Endothelial cell of umbilical vein (primary cell): ENCODE measurements at regions of chr2 and their contacts with region 1.

Region 1: GRCh38 chr2:95728878-95729596 is 137.2 kb downstream of the TRIM43 start:
- DNase-seq: peak; percentile 78
- H3K4me3 ChIP-seq: no peak overlapping the region
- H3K27ac ChIP-seq: no peak overlapping the region
- H3K4me1 ChIP-seq: no peaks in the 10 kb centered on the region
- H3K27me3 ChIP-seq: no peaks in the 10 kb centered on the region
- CTCF ChIP-seq: peak; percentile 34 to 48
- POLR2A ChIP-seq: no peak

Region 2: DNA sequence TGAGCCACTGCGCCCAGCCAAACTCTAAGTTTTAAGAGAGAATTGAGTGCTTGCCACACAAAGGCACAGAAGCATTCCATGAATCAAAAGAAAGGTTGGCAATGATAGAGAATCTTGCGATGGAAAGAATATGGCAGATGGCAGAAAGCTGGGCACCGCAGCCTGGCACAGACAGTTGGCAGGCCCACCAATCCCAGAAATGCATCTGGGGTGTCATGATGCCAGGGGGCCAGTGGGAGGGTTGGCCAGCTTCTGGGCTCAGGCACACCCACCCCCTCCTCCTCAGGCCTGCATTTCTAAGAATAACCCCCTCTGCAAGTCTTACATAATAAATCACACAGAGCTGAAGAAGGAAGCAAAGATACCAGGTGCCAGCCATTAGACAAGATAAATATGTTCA is 543.8 kb before region 1 on chr2:
- CTCF ChIA-PET with region 1: no interaction called
- POLR2A ChIA-PET with region 1: no interaction called
- dilution Hi-C with region 1: no loop called
- intact Hi-C with region 1: loop called (anchors 5 kb)
- DNase-seq: no peak
- H3K4me3 ChIP-seq: no peak overlapping the region
- H3K27ac ChIP-seq: no peak overlapping the region
- H3K4me1 ChIP-seq: no peaks in the 10 kb centered on the region
- H3K27me3 ChIP-seq: no peaks in the 10 kb centered on the region
- CTCF ChIP-seq: no peak
- POLR2A ChIP-seq: no peak

Region 3: DNA sequence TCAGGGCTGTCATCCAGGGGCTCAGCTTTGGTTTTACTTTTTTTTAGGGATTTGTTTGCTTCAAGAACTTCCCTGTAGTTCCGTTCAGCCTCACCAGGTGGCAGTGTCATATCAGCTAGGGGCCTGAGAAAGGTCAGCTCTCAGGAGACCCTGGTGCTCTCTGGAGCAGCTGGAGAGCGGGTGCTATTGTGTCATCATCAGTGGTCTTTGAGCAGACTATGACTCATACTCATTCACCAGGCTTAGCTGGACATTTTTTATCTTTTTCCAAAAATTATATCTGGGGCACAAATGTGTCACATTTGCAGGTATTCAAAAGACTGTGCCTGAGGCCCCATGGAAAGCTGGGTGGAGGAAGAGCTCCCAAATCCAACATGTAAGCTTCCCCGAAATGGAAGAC is 497.3 kb before region 1 on chr2:
- CTCF ChIA-PET with region 1: no interaction called
- POLR2A ChIA-PET with region 1: no interaction called
- dilution Hi-C with region 1: no loop called
- intact Hi-C with region 1: loop called (anchors 5 kb)
- DNase-seq: peak; percentile 45
- H3K4me3 ChIP-seq: no peak overlapping the region
- H3K27ac ChIP-seq: no peak overlapping the region
- H3K4me1 ChIP-seq: no peaks in the 10 kb centered on the region
- H3K27me3 ChIP-seq: no peaks in the 10 kb centered on the region
- CTCF ChIP-seq: peak; percentile 56 to 60
- POLR2A ChIP-seq: no peak

Region 4: GRCh38 chr2:95552911-95553310 is 176.1 kb before region 1 on chr2:
- CTCF ChIA-PET with region 1: no interaction called
- POLR2A ChIA-PET with region 1: no interaction called
- dilution Hi-C with region 1: no loop called
- intact Hi-C with region 1: no loop called
- DNase-seq: no peak
- H3K4me3 ChIP-seq: no peak overlapping the region
- H3K27ac ChIP-seq: no peak overlapping the region
- H3K4me1 ChIP-seq: no peaks in the 10 kb centered on the region
- H3K27me3 ChIP-seq: peaks cover 2 to 14% of the 10 kb centered on the region in 2 experiments
- CTCF ChIP-seq: no peak
- POLR2A ChIP-seq: no peak

Region 5: DNA sequence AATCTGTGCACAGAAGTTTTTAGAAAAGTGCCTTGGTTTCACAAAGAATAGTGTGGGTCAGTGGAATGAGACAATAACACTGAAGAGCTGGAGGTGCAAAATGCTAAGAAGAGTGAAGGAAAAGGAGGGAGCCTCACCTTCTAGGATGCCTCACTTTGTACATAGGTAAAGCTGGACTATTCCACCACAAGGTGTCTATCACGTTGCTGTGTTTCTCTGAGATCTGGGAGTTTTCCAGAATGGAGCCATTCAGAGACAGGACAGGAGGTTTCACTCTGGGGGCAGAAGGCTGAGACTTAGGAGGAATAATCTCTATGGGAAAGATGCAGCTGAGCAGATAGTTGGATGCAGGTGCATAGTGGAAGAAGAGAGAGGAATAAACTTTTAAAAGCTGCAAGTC is 160.5 kb before region 1 on chr2:
- CTCF ChIA-PET with region 1: no interaction called
- POLR2A ChIA-PET with region 1: no interaction called
- dilution Hi-C with region 1: no loop called
- intact Hi-C with region 1: no loop called
- DNase-seq: no peak
- H3K4me3 ChIP-seq: no peak overlapping the region
- H3K27ac ChIP-seq: no peak overlapping the region
- H3K4me1 ChIP-seq: no peaks in the 10 kb centered on the region
- H3K27me3 ChIP-seq: peaks cover 3 to 26% of the 10 kb centered on the region in 2 experiments
- CTCF ChIP-seq: no peak
- POLR2A ChIP-seq: no peak